ENCODE measurements at regions of chr9 and their contacts with region 1.

Region 1: DNA sequence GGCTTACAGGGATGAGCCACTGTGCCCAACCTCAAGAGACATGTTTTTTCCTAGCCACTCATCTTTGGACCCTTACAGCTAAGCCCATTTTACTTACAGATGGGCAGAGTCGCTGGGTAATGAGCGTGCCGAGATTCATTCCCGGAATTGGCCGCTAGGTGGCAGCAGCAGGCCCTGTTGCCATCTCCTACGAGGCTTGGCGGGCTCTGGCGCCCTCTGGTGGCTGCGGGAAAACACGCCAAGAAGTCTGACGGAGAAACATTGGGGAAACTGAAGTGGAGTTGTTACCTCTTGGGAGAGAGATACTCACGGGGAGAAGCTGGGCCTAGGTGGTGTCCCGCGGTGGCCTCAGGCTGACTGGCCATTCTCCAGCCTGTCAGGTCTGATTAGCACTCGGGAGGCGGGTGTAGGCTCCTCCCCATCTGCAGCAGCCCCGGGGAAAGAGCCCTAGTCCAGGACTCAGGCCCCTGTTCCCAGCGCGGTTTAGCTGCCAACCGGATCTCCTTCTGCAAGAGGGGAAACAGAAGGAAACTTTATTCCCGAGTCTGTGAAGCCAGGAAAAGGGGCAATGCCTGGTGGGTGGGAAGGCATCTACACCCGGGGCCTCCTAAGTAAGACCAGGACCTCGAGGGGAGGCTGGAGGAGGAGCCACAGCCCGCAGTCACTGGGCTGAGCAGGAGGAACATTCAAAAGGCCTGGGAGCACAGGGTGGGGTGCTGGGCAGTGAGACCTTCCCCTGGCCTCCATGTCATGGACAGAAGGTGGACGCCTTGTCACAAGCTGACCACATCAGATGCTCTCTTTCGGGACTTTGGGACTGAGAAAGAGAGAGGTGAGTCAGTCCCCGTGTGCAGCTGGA is 9.7 kb downstream of the PTGES2 start:
- DNase-seq: peak; percentile 95 to 100
- ATAC-seq: peak; percentile 91
- H3K4me3 ChIP-seq: no peak overlapping the region
- H3K27ac ChIP-seq: no peak overlapping the region
- H3K4me1 ChIP-seq: no peaks in the 10 kb centered on the region
- H3K27me3 ChIP-seq: no peaks in the 10 kb centered on the region

Region 2: GRCh38 chr9:128034821-128035764 is 82.7 kb before region 1 on chr9:
- intact Hi-C with region 1: loop called in 1 of 2 experiments (anchors 1 kb)
- DNase-seq: peak; percentile 74 to 80
- ATAC-seq: peak; percentile 96
- H3K4me3 ChIP-seq: no peak overlapping the region
- H3K27ac ChIP-seq: no peak overlapping the region
- H3K4me1 ChIP-seq: no peaks in the 10 kb centered on the region
- H3K27me3 ChIP-seq: no peaks in the 10 kb centered on the region

Region 3: GRCh38 chr9:128067876-128068613 is 49.8 kb before region 1 on chr9 and contains the start of gene SLC25A25:
- intact Hi-C with region 1: no loop called
- DNase-seq: peak; percentile 100
- ATAC-seq: peak; percentile 96
- H3K4me3 ChIP-seq: peak within 1 kb of the TSS; percentile 81 to 91
- H3K27ac ChIP-seq: peak within 1 kb of the TSS; percentile 70 to 95
- H3K4me1 ChIP-seq: peaks cover 2 to 7% of the 10 kb centered on the region in 2 donors
- H3K27me3 ChIP-seq: no peaks in the 10 kb centered on the region
- total RNA-seq, gene SLC25A25: 16.3 to 40.9 TPM

Region 4: DNA sequence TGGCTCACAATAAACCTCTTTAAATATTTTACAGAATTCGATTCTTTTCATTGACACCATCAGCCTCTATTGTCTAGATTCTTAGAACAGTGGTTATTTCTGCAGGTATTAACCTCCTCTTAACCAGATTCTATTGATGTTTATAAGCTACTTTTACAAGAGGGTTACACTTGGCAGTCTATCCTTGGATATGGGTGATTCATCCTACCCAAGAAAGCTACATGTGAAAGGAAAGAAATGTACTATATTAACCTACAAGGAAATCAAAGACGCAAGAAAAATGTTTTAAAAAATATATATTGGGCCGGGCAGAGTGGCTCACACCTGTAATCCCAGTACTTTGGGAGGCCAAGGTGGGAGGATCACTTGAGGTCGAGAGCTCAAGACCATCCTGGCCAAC is 33.1 kb before region 1 on chr9:
- intact Hi-C with region 1: loop called in 1 of 2 experiments (anchors 2 kb)
- DNase-seq: no peak
- ATAC-seq: no peak
- H3K4me3 ChIP-seq: no peak overlapping the region
- H3K27ac ChIP-seq: no peak overlapping the region
- H3K4me1 ChIP-seq: no peaks in the 10 kb centered on the region
- H3K27me3 ChIP-seq: no peaks in the 10 kb centered on the region